SK-N-SH (cell line): ENCODE measurements at regions of chr7 and their contacts with region 1.

Region 1: DNA sequence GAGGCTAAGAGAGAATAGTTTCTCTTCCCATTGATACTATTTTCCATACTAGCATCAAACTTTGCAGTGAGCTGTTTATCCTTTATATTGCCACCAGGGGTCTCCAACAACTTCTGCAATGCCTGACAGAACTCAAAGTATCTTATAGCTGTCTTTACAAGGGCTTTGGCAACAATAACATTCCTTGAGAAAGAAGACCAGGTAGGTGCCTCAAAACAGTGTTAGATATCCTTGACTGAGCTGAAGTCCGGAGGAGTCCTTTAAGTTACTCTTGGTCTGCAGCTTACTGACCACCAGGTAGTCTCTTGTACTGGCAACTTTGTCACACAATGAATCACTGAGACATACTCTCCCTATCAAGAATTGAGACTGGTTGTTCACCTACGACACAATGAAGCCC is 30.0 kb upstream of the TES start:
- DNase-seq: peak; percentile 71
- H3K4me3 ChIP-seq: no peak overlapping the region
- H3K27ac ChIP-seq: no peak overlapping the region
- H3K4me1 ChIP-seq: peaks cover 0 to 6% of the 10 kb centered on the region in 2 experiments; a peak in 1 of 4 replicates
- H3K27me3 ChIP-seq: no peaks in the 10 kb centered on the region
- CTCF ChIP-seq: peak; percentile 95
- EP300 ChIP-seq: no peak
- RAD21 ChIP-seq: peak; percentile 95

Region 2: DNA sequence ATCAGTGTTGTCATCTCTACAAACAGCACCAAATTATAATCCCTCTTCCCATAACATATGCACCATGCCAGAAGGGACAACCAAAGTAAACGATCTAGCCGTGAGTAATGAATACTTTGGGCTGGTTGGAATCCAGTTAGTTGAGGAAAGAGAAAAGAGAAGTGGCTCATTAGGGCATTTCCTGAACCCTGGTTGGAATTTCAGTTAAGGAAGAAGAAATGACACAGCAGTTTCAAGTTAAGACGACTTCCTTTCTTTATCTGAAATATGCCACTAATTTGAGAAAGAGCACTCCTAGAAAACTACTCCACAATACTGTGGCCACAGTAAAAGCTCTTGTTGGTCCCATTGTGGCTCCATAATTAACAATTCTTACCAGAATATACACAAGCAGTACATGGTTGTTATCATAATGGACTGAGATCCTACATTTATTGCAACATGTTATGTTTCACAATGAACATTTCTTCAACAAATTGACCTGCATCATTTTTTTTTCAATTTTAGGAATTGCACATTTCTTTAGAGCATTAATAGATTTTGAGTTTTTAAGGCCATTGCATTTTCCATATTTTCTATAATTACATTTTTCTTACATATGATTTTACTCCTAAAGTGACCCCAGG is 149.5 kb before region 1 on chr7 and contains the start of gene TFEC:
- CTCF ChIA-PET with region 1: no interaction called
- POLR2A ChIA-PET with region 1: no interaction called
- DNase-seq: no peak
- H3K4me3 ChIP-seq: no peak within 1 kb of the TSS
- H3K27ac ChIP-seq: no peak within 1 kb of the TSS
- H3K4me1 ChIP-seq: peaks cover 0 to 3% of the 10 kb centered on the region in 2 experiments; a peak in 1 of 4 replicates
- H3K27me3 ChIP-seq: no peaks in the 10 kb centered on the region
- CTCF ChIP-seq: no peak
- EP300 ChIP-seq: no peak
- RAD21 ChIP-seq: no peak
- polyA plus RNA-seq, gene TFEC: 0.02 TPM in 1 of 2 replicates, not detected in the other

Region 3: DNA sequence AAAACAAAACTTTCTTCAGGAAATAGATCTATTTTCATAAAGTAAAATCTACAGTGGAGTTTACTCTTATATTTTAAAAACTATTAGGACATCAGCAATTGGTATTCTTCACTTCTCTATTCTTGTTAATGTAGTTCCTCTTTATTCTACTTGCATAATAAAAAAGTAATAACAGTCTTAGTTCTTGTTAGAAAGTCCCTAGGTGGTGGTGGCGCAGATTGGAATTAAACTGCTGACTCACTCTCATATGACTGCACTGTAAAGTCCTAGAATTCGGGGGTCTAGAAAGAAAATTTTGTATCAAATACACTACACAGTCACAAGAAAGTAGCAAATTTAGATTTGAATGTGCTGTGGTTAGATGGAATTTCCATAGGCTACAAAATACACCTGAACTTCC is 14.6 kb before region 1 on chr7:
- CTCF ChIA-PET with region 1: interaction called, 28 read pairs
- POLR2A ChIA-PET with region 1: no interaction called
- DNase-seq: no peak
- H3K4me3 ChIP-seq: no peak overlapping the region
- H3K27ac ChIP-seq: no peak overlapping the region
- H3K4me1 ChIP-seq: no peaks in the 10 kb centered on the region
- H3K27me3 ChIP-seq: peaks cover 72% of the 10 kb centered on the region
- CTCF ChIP-seq: no peak
- EP300 ChIP-seq: no peak
- RAD21 ChIP-seq: no peak

Region 4: GRCh38 chr7:116200963-116201362 is 20.7 kb after region 1 on chr7:
- CTCF ChIA-PET with region 1: interaction called, 27 read pairs
- POLR2A ChIA-PET with region 1: no interaction called
- DNase-seq: no peak
- H3K4me3 ChIP-seq: no peak overlapping the region
- H3K27ac ChIP-seq: no peak overlapping the region
- H3K4me1 ChIP-seq: no peaks in the 10 kb centered on the region
- H3K27me3 ChIP-seq: peaks cover 19% of the 10 kb centered on the region
- CTCF ChIP-seq: no peak
- EP300 ChIP-seq: no peak
- RAD21 ChIP-seq: no peak

Region 5: GRCh38 chr7:116218051-116218645 is 37.8 kb after region 1 on chr7:
- CTCF ChIA-PET with region 1: interaction called, 37 read pairs
- POLR2A ChIA-PET with region 1: no interaction called
- DNase-seq: peak; percentile 58
- H3K4me3 ChIP-seq: 0 out of 4 replicates have a peak overlapping the region, but pooled peaks of 1 of the 2 experiments have one; percentile 9
- H3K27ac ChIP-seq: peak overlapping the region; percentile 47 to 99
- H3K4me1 ChIP-seq: peaks cover 9 to 67% of the 10 kb centered on the region in 2 experiments; a peak in 3 of 4 replicates
- H3K27me3 ChIP-seq: peaks cover 10% of the 10 kb centered on the region; the same call in 1 of the 2 replicates
- CTCF ChIP-seq: no peak
- EP300 ChIP-seq: peak; percentile 92 to 97
- RAD21 ChIP-seq: peak; percentile 36; the same call in 1 of the 2 replicates

Region 6: DNA sequence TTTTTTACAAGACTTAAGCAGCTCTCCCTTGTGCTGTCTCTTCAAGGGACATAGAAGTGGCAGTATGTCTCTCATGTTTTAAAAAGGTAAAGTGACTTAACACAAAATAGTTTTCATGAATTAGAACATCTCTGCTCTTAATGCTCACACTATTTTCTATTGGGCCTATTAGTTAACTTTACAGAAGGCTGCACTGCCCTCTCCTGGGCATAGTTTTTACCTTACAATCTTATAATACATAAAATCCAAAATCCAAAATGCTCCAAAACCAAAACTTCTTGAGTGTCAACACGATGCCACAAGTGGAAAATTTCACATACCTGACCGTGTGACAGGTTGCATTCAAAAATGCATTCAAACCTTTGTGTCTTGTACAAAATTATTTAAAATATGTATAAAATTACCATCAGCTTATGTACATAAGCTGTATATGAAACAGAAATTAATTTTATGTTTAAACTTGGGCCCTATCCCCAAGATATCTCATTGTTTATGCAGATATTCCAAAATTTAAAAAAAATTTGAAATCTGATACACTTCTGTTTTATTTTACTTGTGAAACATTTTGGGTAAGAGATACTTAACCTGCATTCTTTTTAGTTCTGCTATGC is 55.8 kb after region 1 on chr7:
- CTCF ChIA-PET with region 1: interaction called, 428 read pairs
- POLR2A ChIA-PET with region 1: no interaction called
- DNase-seq: peak; percentile 35
- H3K4me3 ChIP-seq: no peak overlapping the region
- H3K27ac ChIP-seq: no peak overlapping the region
- H3K4me1 ChIP-seq: peaks cover 18 to 19% of the 10 kb centered on the region in 2 experiments; a peak in 3 of 4 replicates
- H3K27me3 ChIP-seq: no peaks in the 10 kb centered on the region
- CTCF ChIP-seq: peak; percentile 95
- EP300 ChIP-seq: no peak
- RAD21 ChIP-seq: peak; percentile 93

Region 7: GRCh38 chr7:116258734-116259133 is 78.4 kb after region 1 on chr7:
- CTCF ChIA-PET with region 1: interaction called, 31 read pairs
- POLR2A ChIA-PET with region 1: no interaction called
- DNase-seq: peak; percentile 32
- H3K4me3 ChIP-seq: peak overlapping the region in 1 of 2 experiments; percentile 4; a peak in 1 of 4 replicates
- H3K27ac ChIP-seq: peak overlapping the region; percentile 31 to 43; a peak in 3 of 4 replicates
- H3K4me1 ChIP-seq: peaks cover 0 to 12% of the 10 kb centered on the region in 2 experiments; a peak in 2 of 4 replicates
- H3K27me3 ChIP-seq: no peaks in the 10 kb centered on the region
- CTCF ChIP-seq: peak; percentile 99
- EP300 ChIP-seq: no peak
- RAD21 ChIP-seq: peak; percentile 87

Region 8: DNA sequence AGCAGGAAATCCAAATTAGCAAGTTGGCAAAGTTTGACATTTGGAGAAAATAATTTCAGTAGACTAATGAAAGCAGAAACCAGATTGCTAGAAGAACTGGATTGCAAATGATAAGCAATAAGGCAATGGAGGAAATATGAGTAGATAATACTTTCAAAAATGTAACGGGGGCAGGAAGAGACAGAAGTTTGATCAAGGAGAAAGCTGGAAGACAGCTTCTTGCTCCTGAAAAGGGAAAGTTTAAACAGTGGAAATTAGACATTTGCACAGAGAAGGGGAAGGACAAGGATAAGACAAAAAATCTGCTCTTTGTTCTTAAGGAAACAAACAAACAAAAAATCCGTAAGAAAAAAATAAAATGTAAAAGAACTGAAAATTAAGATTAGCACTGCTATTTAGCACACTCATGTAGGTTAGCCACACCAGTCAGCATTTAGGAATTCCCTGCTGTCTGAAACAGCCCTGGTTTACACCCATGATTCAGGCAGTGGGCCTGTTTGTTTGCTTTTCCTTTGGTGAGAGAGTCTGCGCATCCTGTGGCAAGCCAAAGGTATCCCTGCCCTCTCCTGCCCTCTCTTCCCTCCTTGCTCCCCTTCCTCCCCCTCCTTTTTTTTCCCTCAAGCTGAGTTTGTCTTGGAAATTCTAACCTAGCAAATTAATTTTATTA is 215.0 kb after region 1 on chr7:
- CTCF ChIA-PET with region 1: no interaction called
- POLR2A ChIA-PET with region 1: no interaction called
- DNase-seq: no peak
- H3K4me3 ChIP-seq: no peak overlapping the region; a peak in 1 of 4 replicates
- H3K27ac ChIP-seq: peak overlapping the region; percentile 71 to 74; a peak in 3 of 4 replicates
- H3K4me1 ChIP-seq: peaks cover 0 to 36% of the 10 kb centered on the region in 2 experiments; a peak in 3 of 4 replicates
- H3K27me3 ChIP-seq: no peaks in the 10 kb centered on the region
- CTCF ChIP-seq: no peak
- EP300 ChIP-seq: peak in 1 of 2 experiments; percentile 72; a peak in 2 of 4 replicates
- RAD21 ChIP-seq: no peak